ENCODE measurements at regions of chr6 and their contacts with region 1.

Region 1: DNA sequence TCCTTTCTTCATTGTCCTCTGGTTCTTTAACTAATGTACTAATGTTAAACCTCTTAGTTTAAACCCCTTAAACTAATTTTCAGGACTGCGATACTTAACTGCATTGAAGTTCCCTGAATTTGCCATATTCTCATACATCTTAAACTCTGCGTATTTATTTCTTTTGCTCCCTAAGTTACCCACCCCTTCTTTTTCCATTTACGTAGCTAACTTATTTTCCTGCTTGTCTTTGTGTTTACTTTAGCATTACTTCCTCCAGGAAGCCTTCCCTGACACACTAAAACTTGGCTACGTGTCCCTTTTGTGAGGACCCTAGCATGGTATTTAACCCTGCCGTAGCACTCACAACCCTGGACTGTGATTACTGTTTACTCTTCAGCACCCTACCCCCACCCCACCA is 79.0 kb downstream of the UBR2 start:
- DNase-seq: no peak

Region 2: DNA sequence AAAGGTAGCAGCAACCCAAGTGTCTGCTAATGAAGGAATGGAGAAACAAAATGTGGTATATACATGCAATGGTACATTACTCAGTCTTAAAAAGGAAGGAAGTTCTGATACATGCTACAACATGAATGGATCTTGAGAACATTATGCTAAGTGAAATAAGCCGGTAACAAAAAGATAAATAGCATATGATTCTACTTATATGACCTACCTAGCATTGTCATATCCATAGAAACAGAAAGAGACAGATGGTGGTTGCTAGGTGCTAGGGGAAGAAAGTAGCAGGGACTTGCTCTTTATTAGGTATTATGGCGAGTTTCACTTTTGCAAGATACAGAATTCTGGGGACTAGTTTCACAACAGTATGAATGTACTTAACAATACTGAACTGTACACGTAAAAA is 32.4 kb before region 1 on chr6:
- intact Hi-C with region 1: no loop called
- DNase-seq: no peak

Region 3: DNA sequence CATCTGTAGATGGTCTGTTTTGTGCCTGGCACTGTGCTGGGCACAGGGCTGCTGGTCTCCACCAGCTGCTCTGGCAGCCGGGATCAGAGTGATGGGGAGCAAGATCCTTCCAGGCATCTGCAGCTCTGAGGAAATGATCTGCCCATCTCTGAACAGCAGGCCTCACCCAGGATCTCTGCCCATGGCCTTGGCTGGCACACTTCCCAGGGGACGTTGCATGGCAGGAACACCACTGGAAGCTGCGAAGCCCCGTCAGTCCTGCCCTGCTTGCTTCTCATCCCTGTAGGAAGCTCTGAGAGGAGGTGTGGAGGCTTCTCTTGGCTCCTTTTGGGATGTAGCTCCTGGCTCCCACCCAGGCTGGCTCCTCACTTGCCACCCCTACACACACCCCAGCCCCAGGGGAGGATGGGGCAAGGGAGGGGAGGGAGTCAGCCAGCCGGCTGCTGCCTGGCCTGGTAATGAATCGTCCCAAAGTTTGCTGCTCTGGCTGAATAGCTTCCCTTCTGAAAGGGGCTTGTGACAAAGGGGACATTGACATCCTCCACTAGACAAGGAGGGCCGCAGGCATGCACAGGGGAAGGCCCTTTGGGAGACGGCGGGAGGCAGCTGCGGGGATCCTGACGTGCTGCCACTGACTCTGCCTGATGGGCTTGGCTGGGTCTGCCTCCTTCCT is 1236.2 kb after region 1 on chr6:
- intact Hi-C with region 1: loop called in 1 of 2 experiments (anchors 5 kb)
- DNase-seq: no peak